Activated CD4-positive, alpha-beta T cell treated with anti-CD3 and anti-CD28 coated beads, Interleukin-2, amount 10 ng/mL, durations not matched to agents 24 days and 14 days (primary cell): ENCODE measurements at regions of chr19 and their contacts with region 1.

Region 1: GRCh38 chr19:18203863-18204393 is at the start of gene RAB3A:
- DNase-seq: peak; percentile 100
- H3K4me3 Mint-ChIP-seq: peak within 1 kb of the TSS; percentile 97
- H3K27ac Mint-ChIP-seq: peak within 1 kb of the TSS; percentile 95
- H3K4me1 Mint-ChIP-seq: peaks cover 21% of the 10 kb centered on the region
- H3K27me3 Mint-ChIP-seq: peaks cover 3% of the 10 kb centered on the region
- total RNA-seq, gene RAB3A: 9.6 and 10.3 TPM in 2 replicates

Region 2: DNA sequence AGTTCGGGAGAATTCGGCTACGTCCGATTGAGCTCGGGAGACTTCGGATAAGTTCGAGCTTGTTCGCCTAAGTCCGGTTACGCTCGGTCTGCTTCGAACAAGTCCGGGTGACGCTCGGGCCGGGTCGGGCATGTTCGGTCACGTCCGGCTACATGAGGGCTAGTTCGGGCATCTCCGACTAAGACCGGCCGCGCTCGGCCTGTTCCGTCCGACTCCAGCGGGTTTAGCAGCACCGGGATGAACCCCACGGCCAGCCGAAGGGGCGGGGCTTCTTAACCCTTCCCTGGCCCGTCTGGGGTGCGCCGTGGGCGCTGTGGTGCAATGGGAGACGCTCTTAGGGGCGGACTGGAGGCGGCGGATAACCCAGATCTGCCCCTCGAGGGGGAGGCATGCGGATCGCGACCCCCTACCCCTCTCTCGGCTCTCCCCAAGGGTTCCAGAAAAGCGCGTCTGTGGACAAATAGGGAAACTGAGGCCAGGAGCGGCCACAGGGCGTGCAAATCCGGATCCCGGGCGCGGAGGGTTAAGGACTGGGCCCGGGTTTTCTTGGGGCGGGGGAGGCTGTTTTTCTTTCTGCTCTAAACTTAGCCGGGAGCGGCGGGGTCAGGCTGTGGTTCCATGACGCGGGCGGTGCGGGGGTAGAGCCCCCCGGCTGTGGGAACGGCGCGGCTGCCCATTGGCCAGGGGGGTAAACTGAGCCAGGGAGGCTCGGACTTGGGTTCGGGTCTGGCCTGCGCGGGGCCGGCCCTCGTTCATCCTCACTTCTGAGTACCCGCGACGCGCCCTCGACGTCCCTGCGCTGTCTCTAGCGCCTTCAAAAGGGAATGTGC is 20.8 kb after region 1 on chr19:
- intact Hi-C with region 1: loop called (anchors 2 kb)
- DNase-seq: peak; percentile 97
- H3K4me3 Mint-ChIP-seq: peak overlapping the region; percentile 91
- H3K27ac Mint-ChIP-seq: peak overlapping the region; percentile 76
- H3K4me1 Mint-ChIP-seq: peaks cover 12% of the 10 kb centered on the region
- H3K27me3 Mint-ChIP-seq: peaks cover 51% of the 10 kb centered on the region

Region 3: DNA sequence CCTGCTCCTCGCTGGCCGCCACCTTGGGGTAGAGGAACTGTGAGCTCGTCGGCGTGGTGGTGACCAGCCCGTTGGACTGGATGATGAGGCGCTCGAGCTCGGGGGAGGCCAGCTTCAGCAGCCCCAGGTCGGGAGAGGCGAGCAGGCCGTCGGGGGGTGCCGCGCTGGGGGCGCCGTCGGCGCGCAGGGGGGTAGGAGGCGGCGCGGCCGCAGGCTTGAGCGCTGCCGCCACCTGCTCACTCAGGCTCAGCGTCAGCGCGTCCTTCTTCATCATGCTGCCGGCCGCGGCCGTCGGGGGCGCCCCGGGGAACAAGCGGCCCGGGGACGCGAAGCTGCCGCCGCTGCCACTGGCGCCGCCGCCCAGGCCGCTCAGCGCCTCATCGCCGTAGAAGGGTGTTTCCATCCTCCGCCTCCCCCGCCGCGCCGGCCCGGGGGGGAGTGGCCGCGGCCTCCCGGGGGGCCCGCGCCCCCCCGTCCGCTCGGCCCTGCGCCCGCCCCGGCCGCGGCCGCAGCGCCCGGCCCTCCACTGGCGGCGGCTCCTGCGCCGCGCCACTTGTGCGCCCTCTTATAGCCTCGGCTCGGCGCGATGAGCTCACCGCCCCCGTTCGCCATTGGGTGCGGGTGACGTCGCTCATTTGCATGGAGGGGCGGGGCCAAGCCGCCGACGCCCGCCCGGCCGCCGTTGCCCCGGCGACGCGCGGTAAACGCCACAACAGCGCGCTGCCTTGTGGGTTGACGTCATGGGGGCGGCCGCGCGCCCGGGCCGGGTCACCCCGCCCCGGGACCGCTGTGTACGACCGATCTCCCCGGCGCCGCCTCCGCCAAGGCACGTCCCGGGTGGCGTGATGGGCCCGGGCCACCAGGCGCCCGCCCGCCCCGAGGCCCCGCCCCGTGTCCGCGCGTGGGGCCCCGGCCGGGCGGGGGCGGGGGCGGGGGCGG is 77.4 kb after region 1 on chr19 and contains the start of gene JUND:
- intact Hi-C with region 1: loop called (anchors 2 kb)
- DNase-seq: peak; percentile 99
- H3K4me3 Mint-ChIP-seq: peak within 1 kb of the TSS; percentile 99
- H3K27ac Mint-ChIP-seq: peak within 1 kb of the TSS; percentile 98
- H3K4me1 Mint-ChIP-seq: peaks cover 46% of the 10 kb centered on the region
- H3K27me3 Mint-ChIP-seq: peaks cover 1% of the 10 kb centered on the region
- total RNA-seq, gene JUND: 382 and 413 TPM in 2 replicates

Region 4: DNA sequence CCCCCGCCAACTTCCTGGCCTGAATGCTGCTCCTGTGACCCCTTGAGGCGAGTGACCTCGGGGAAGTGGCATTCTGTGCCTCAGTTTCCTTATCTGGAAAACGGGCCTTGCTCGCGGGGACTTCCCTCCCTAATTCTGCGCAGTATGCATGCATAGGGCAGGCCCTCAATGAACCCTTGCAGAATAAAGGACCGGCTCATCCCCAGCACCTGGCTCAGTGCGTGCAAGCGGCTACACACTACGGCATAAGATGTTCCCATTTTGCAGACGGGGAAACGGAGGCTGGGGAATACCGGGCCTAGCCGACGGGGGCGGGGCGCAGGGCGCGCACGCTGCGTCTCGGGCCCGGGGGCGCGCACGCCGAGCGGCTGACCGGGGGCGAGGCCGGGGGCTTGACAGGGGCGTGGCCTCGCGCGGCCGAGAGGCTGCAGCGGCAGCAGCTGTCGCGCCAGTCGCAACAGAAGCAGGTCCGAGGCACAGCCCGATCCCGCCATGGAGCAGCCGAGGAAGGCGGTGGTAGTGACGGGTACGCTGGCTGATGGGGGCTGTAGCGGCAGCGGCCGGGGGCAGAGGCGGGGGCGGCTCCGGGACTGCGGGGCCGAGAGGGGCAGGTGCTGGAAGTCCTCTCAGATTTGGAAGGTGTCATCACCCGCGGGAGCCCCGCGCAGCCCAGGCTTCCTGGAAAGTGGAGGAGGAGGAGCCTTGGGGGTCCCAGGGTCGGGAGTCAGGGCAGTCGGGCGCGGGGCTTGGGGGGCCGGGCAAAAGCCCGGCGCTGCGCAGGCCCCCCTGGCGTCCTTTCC is 136.5 kb after region 1 on chr19 and contains the start of gene PGPEP1:
- intact Hi-C with region 1: loop called (anchors 1 kb)
- DNase-seq: peak; percentile 91
- H3K4me3 Mint-ChIP-seq: peak within 1 kb of the TSS; percentile 84
- H3K27ac Mint-ChIP-seq: peak within 1 kb of the TSS; percentile 90
- H3K4me1 Mint-ChIP-seq: peaks cover 10% of the 10 kb centered on the region
- H3K27me3 Mint-ChIP-seq: no peaks in the 10 kb centered on the region
- total RNA-seq, gene PGPEP1: 14.6 and 18.5 TPM in 2 replicates